GM12878 (cell line): ENCODE measurements at regions of chr19 and their contacts with region 1.

Region 1: DNA sequence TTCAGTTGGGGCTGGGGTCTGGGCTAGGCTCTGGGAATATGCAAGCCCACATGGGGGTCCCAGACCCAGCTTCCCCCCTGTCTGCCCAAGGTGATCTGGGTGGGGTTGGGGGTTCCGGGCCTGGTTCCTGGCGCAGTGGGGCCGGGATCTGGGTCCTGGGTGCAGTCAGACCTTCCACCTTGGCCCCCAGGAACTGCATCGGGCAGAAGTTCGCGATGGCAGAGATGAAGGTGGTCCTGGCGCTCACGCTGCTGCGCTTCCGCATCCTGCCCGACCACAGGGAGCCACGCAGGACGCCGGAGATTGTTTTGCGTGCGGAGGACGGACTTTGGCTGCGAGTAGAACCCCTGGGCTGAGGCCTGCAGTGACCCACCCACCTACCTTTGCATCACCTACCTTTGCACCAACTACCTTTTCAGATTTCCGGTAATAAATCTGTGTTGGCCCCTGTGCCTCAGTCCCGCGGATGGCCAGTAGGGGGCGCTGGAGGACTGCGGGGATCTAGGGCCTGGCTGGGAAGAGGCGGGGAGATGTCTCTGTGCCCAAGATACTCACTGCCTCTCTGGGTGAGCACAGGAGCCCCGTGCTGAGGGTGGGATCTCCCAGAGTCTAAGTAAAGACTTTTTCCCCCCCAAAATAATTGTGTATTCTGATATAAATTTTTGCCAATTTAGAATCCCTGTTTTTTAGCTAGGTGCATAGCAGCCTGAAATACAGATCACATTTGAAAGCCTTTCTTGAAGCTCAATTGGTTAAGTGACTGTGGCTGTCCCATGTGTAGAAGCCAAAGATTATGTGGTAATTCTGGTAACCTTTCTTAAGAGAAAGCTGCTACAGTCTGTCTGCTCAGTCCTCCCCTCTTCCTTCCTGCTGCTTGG is 11.5 kb upstream of the CYP4F3 start:
- DNase-seq: peak; percentile 9
- ATAC-seq: peak; percentile 93
- H3K4me3 ChIP-seq: no peak overlapping the region
- H3K27ac ChIP-seq: no peak overlapping the region
- H3K4me1 ChIP-seq: no peaks in the 10 kb centered on the region
- H3K27me3 ChIP-seq: no peaks in the 10 kb centered on the region
- CTCF ChIP-seq: peak; percentile 90 to 96 (median 95)
- EP300 ChIP-seq: no peak
- POLR2A ChIP-seq: no peak
- RAD21 ChIP-seq: peak; percentile 93

Region 2: DNA sequence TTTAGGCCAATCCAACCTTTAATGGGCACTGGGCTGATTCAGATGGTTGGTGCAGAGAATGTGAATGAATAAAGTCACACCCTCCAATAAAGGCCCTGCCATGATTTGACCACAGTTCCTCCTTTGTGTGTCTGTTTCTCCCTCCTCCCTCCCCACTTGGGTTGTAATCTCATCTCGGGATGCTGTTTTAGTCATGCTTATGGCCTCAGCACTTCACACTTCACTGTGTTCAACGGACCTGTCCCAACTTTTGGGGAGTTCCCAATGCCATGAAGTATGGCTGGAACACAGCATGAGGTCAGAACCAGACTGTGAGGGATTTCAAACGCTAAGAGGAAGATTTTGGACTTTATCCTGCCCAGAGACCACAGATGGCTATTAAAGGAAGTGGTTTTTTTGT is 476.9 kb after region 1 on chr19:
- CTCF ChIA-PET with region 1: no interaction called
- POLR2A ChIA-PET with region 1: no interaction called
- RAD21 ChIA-PET with region 1: no interaction called
- SMC1A ChIA-PET with region 1: interaction called, 5 read pairs
- in situ Hi-C with region 1: no loop called
- intact Hi-C with region 1: loop called (anchors 5 kb)
- DNase-seq: no peak
- ATAC-seq: peak; percentile 75
- H3K4me3 ChIP-seq: no peak overlapping the region
- H3K27ac ChIP-seq: no peak overlapping the region
- H3K4me1 ChIP-seq: peaks cover 15% of the 10 kb centered on the region
- H3K27me3 ChIP-seq: no peaks in the 10 kb centered on the region
- CTCF ChIP-seq: no peak
- EP300 ChIP-seq: no peak
- POLR2A ChIP-seq: no peak
- RAD21 ChIP-seq: no peak